MCF 10A (cell line): ENCODE measurements at regions of chr20 and their contacts with region 1.

Region 1: GRCh38 chr20:62972270-62973032 is 19.9 kb downstream of the SLC17A9 start:
- DNase-seq: peak; percentile 74
- H3K4me3 Mint-ChIP-seq: peak overlapping the region; percentile 41
- H3K27ac Mint-ChIP-seq: no peak overlapping the region
- H3K4me1 Mint-ChIP-seq: peaks cover 6% of the 10 kb centered on the region
- H3K27me3 Mint-ChIP-seq: peaks cover 7% of the 10 kb centered on the region
- CTCF ChIP-seq: peak; percentile 93

Region 2: DNA sequence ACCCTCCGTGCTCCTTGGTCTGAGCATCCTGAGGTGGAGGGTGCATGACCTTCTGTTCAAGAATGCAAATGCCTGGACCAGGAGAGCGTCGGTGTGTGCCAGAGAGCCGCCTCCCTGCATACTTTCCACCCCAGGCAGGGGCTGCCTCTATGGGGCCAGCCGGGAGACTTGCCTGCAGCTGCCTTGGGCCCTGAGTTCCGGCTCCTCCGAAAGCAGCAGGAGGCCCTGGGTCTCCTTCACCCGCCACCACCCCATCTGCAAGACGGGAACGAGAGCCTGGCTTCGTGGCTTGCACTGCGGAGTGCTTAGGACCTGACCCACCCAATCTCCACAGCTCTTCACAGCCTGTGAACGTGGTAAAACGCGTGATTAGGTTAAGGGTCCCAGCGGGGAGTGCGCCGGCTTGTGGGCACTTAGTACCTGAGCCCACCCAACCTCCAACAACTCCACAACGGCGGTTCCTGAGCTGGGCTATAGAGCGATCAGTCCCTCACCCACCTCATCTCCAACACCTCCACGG is 17.9 kb after region 1 on chr20:
- CTCF ChIA-PET with region 1: interaction called, 11 read pairs
- POLR2A ChIA-PET with region 1: no interaction called
- intact Hi-C with region 1: no loop called
- DNase-seq: no peak
- H3K4me3 Mint-ChIP-seq: no peak overlapping the region
- H3K27ac Mint-ChIP-seq: no peak overlapping the region
- H3K4me1 Mint-ChIP-seq: peaks cover 4% of the 10 kb centered on the region
- H3K27me3 Mint-ChIP-seq: peaks cover 47% of the 10 kb centered on the region
- CTCF ChIP-seq: no peak

Region 3: DNA sequence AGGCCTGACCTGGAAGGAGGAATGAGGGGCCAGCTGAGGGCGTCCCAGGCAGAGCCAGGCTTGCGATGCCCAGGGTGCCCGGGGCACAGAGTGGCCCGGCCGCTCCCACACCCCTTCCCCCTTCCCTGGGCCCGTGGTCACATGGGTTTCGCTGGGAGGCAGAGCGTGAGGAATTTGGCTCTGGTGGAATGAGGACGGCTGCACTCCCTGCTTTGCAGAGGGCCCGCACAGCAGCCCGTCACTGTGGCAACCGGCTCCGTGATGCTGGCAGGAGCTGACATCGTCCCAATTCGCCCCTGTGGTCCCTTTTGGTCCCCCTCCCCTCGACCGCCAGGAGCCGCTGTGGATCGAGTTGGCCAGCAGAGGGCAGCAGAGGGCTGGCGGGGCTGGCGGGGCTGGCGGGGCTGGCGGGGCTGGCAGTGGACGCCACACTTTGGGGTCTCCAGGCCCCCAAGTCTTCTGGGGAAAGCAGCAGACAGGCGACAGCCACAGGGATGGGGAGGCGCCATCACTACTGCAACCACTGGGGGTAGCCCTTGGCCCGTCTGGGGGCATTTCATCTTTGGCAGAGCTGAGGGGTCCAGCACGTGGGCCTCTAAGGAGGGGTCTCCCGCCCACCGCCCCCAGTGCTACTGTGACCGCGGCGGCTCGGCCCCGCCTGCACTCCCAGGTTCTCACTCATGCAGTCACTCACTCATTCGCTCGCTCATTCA is 83.9 kb after region 1 on chr20:
- CTCF ChIA-PET with region 1: no interaction called
- POLR2A ChIA-PET with region 1: no interaction called
- intact Hi-C with region 1: no loop called
- DNase-seq: peak; percentile 11
- H3K4me3 Mint-ChIP-seq: no peak overlapping the region
- H3K27ac Mint-ChIP-seq: no peak overlapping the region
- H3K4me1 Mint-ChIP-seq: no peaks in the 10 kb centered on the region
- H3K27me3 Mint-ChIP-seq: peaks cover 33% of the 10 kb centered on the region
- CTCF ChIP-seq: peak; percentile 86